ENCODE measurements at regions of chr16 and their contacts with region 1.

Region 1: GRCh38 chr16:27972500-27972899 is 91.0 kb downstream of the GSG1L start:
- DNase-seq: peak; percentile 19
- H3K4me3 ChIP-seq: no peak overlapping the region
- H3K27ac ChIP-seq: no peak overlapping the region
- H3K4me1 ChIP-seq: no peaks in the 10 kb centered on the region
- H3K27me3 ChIP-seq: no peaks in the 10 kb centered on the region
- CTCF ChIP-seq: peak; percentile 39

Region 2: GRCh38 chr16:28069971-28070794 is 97.7 kb after region 1 on chr16:
- intact Hi-C with region 1: loop called (anchors 5 kb)
- DNase-seq: no peak
- H3K4me3 ChIP-seq: no peak overlapping the region
- H3K27ac ChIP-seq: no peak overlapping the region
- H3K4me1 ChIP-seq: no peaks in the 10 kb centered on the region
- H3K27me3 ChIP-seq: no peaks in the 10 kb centered on the region
- CTCF ChIP-seq: no peak

Region 3: GRCh38 chr16:28218104-28218503 is 245.6 kb after region 1 on chr16:
- intact Hi-C with region 1: loop called (anchors 5 kb)
- DNase-seq: peak; percentile 35
- H3K4me3 ChIP-seq: no peak overlapping the region
- H3K27ac ChIP-seq: no peak overlapping the region
- H3K4me1 ChIP-seq: no peaks in the 10 kb centered on the region
- H3K27me3 ChIP-seq: no peaks in the 10 kb centered on the region
- CTCF ChIP-seq: peak; percentile 38

Measured in colonic mucosa (tissue), 4 donors.